ENCODE measurements at regions of chr4 and their contacts with region 1.

Region 1: GRCh38 chr4:88526221-88526815 is 2.7 kb upstream of the PYURF start:
- DNase-seq: no peak
- H3K4me3 ChIP-seq: no peak overlapping the region
- H3K27ac ChIP-seq: no peak overlapping the region
- H3K4me1 ChIP-seq: peaks cover 6% of the 10 kb centered on the region
- H3K27me3 ChIP-seq: no peaks in the 10 kb centered on the region
- CTCF ChIP-seq: peak; percentile 18

Region 2: DNA sequence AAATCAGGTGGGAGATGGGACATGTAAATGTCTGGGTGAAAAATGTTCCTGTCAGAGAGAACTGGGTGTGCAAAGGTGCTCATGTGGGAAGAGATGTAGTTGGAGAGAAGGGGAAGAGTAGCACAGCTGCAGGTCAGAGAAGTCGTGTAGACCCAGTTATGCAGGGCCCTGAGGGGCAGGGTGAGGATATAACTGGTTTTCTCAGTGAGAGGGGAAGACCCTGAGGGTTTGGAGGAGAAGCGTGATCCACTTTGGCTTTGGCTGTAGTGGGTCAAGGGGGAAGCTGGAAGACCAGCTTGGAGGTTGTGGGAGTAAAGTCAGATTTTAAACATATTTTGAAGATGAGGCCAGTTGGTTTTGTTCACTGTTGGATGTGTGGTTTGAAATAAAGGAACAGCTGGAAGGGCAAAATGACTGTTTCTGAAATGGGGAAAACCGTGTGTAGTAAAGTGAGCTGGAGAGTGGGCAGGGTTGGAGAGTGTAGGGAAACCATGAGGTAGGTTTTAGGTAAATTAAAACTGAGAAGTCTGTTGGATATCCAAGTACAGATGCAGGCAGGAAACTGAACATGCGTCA is 127.1 kb after region 1 on chr4:
- intact Hi-C with region 1: loop called (anchors 5 kb)
- DNase-seq: no peak
- H3K4me3 ChIP-seq: no peak overlapping the region
- H3K27ac ChIP-seq: no peak overlapping the region
- H3K4me1 ChIP-seq: no peaks in the 10 kb centered on the region
- H3K27me3 ChIP-seq: no peaks in the 10 kb centered on the region
- CTCF ChIP-seq: no peak

Region 3: DNA sequence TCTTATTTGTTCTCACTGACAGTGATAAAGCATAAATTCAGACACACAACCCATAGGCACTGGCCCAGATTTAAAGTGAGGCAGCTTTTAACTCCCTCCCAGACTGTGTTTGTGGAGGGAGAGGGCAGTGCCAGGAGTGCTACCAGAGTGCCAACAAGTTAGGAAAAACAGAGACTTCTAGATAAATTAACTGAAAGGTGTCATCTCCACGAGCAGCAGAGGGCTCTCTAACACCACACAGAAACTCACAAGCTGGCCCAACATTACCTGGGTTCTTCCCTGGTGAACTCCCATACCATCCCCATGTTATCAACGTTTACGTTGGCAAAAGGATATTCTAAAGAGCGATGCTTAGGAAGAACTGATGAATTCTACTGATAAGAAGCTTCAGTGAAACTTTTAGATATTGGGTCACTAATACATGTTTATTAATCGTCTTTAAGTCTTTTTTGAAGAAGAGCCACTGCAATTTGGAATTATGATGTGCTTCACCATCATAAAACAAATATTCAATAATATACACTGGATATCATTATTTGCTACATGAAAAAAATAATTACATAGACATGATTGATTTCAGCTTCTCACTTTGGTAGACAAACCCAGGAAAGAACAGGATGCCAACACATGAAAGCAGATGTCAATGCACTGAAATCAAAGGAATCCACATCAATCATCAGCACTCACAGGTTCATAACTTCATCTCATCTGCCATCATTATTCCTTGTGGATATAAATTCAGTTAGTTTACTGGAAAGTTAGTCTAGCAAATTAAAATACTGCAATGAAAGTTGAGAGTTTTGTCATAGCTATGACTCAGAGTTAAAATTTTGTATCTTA is 292.5 kb after region 1 on chr4:
- intact Hi-C with region 1: no loop called
- DNase-seq: peak; percentile 69
- H3K4me3 ChIP-seq: no peak overlapping the region
- H3K27ac ChIP-seq: no peak overlapping the region
- H3K4me1 ChIP-seq: peaks cover 5% of the 10 kb centered on the region
- H3K27me3 ChIP-seq: no peaks in the 10 kb centered on the region
- CTCF ChIP-seq: peak; percentile 50